ENCODE measurements at regions of chr1 and their contacts with region 1.

Region 1: GRCh38 chr1:212699104-212699624 is 476 bp downstream of the BATF3 start:
- DNase-seq: peak; percentile 86
- H3K4me3 Mint-ChIP-seq: peak overlapping the region; percentile 86
- H3K27ac Mint-ChIP-seq: peak overlapping the region; percentile 87
- H3K4me1 Mint-ChIP-seq: peaks cover 51% of the 10 kb centered on the region
- H3K27me3 Mint-ChIP-seq: peaks cover 15% of the 10 kb centered on the region

Region 2: GRCh38 chr1:212477014-212477679 is 222.0 kb before region 1 on chr1:
- intact Hi-C with region 1: loop called (anchors 2 kb)
- DNase-seq: peak; percentile 93
- H3K4me3 Mint-ChIP-seq: no peak overlapping the region
- H3K27ac Mint-ChIP-seq: peak overlapping the region; percentile 2
- H3K4me1 Mint-ChIP-seq: peaks cover 13% of the 10 kb centered on the region
- H3K27me3 Mint-ChIP-seq: peaks cover 26% of the 10 kb centered on the region

Region 3: DNA sequence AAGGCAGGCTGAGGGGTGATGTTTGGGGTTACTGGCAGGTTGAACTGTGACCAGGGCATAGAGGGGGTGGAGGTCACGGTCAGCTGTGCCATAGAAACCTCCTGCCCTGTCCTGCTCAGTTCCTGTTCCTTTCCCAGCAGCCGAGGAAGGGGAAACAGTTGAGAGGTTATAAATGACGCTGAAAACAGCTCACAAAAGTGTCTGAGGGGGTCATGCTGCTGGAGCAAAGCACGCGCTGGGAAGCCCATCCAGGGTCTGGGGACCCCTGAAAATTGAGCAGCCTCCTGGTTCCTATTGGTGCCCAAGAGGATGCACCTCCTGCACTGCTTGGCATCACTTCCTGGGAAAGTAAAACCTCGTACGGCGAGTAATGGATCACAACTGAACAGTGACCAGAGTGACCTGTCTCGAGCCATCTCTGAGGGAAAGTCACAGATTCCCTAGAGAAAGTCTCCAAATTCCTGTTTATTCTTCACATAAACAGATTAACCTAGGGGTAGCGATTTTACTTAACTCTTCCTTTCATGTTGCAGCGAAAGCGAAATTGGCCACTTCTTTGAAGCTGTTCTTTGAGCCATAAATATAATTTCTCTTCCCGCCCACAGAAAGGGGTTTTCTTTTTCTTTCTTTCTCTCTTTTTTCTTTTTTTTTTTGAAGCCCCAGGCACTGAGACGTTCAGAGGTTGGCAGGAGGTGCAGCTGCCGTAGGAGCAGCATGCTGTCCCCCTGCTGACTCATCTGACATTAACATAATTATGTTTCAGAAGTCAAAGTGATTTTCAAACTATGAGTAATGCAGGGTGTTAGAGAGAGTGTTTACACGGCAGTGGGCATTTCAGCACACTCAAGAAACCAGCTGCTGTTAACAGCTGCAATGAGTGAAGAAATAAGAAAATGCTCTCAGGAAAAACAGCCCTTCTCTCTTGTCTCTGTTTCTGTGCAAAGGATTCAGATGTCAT is 132.4 kb before region 1 on chr1:
- intact Hi-C with region 1: no loop called
- DNase-seq: peak; percentile 86
- H3K4me3 Mint-ChIP-seq: peak overlapping the region; percentile 81
- H3K27ac Mint-ChIP-seq: peak overlapping the region; percentile 89
- H3K4me1 Mint-ChIP-seq: peaks cover 27% of the 10 kb centered on the region
- H3K27me3 Mint-ChIP-seq: peaks cover 35% of the 10 kb centered on the region

Region 4: GRCh38 chr1:212678456-212679410 is 20.4 kb before region 1 on chr1:
- intact Hi-C with region 1: loop called (anchors 1 kb)
- DNase-seq: no peak
- H3K4me3 Mint-ChIP-seq: no peak overlapping the region
- H3K27ac Mint-ChIP-seq: peak overlapping the region; percentile 84
- H3K4me1 Mint-ChIP-seq: peaks cover 53% of the 10 kb centered on the region
- H3K27me3 Mint-ChIP-seq: peaks cover 2% of the 10 kb centered on the region

Region 5: DNA sequence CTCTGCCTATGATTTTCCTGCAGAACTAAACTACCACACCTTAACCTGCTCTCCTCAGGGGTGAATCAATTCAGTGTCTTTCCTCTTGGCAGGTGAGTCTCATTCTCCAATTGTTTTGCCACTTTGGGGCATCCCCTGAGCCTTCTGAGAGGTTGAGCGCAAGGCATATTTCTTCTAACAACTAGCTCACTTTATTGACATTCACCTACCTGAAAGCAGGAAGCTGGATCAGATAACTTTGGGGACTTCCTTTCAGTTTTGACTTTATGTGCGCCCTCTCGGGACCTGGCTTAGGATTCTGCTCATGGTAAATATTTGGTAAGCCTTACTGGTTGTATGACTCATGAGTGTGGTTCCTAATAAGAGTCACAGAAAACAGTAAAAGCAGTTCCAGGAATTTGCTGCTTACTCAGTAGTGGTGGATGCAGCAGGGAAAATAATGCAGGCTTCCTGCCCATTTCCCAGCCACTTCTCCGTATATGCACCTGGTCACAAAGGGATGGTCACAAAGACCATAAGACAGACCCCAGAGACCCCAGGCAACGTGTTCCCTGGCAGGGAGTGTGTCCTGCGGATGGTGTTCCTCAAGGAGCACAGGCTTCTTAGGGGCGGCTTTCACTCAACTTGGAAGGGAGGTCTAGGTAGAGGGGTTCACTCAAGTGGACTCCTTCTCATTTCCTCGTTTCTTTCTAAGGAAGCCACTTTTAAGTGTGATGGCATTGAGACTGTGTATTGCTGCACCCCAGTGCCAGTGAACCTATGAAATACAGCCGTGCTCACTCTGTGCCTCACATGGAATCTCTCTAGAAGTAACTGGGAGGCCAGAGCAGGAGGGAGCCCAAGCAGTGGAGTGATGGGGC is 22.5 kb after region 1 on chr1:
- intact Hi-C with region 1: loop called (anchors 1 kb)
- DNase-seq: peak; percentile 83
- H3K4me3 Mint-ChIP-seq: peak overlapping the region; percentile 69
- H3K27ac Mint-ChIP-seq: peak overlapping the region; percentile 78
- H3K4me1 Mint-ChIP-seq: peaks cover 34% of the 10 kb centered on the region
- H3K27me3 Mint-ChIP-seq: peaks cover 14% of the 10 kb centered on the region

Region 6: DNA sequence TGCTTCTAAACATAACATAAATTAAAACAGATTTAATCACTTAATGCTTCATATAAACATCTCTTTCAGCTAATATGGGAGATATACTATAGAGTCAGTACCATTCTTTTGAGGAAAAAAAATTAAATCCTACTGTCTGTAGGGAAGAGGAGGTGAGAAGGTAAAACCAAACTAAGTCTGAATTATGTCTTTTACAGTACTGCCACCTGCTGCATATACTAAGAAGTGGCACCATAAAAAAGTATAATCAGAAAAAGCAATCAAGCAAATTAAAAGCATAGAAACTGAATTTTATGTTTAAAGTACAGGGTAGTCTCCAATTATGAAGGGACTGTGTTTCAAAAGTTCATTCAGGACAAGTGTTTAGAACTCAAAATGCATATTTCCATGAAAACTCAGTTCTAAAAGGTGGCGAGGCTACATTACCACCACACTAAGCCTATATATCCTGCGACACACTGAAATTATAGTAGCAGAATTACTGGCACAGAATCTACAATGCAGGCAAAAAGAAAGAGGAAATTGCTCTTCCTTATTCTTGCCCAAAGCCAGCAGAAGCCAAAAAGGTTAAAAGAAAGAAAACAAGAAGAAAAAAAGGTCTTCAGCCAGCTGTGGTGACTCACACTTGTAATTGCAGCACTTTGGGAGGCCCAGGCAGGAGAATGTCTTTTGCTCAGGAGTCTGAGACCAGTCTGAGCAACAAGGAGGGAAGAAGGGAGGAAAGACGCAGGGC is 83.4 kb after region 1 on chr1:
- intact Hi-C with region 1: loop called (anchors 1 kb)
- DNase-seq: no peak
- H3K4me3 Mint-ChIP-seq: no peak overlapping the region
- H3K27ac Mint-ChIP-seq: no peak overlapping the region
- H3K4me1 Mint-ChIP-seq: peaks cover 8% of the 10 kb centered on the region
- H3K27me3 Mint-ChIP-seq: no peaks in the 10 kb centered on the region

Measured in activated CD4-positive, alpha-beta T cell treated with anti-CD3 and anti-CD28 coated beads, Interleukin-2, amount 10 ng/mL, durations not matched to agents 24 days and 14 days (primary cell).